Caco-2 (cell line): ENCODE measurements at regions of chr1 and their contacts with region 1.

Region 1: GRCh38 chr1:156096640-156097391 is 14.6 kb upstream of the MEX3A start:
- DNase-seq: peak; percentile 90 to 92
- H3K4me3 ChIP-seq: no peak overlapping the region
- H3K4me3 Mint-ChIP-seq: no peak overlapping the region
- H3K27ac Mint-ChIP-seq: peak overlapping the region; percentile 96
- H3K4me1 ChIP-seq: peaks cover 27% of the 10 kb centered on the region
- H3K4me1 Mint-ChIP-seq: peaks cover 35% of the 10 kb centered on the region
- H3K27me3 ChIP-seq: no peaks in the 10 kb centered on the region
- H3K27me3 Mint-ChIP-seq: no peaks in the 10 kb centered on the region
- CTCF ChIP-seq: peak; percentile 91 to 96

Region 2: GRCh38 chr1:156025877-156026276 is 70.9 kb before region 1 on chr1:
- CTCF ChIA-PET with region 1: no interaction called
- POLR2A ChIA-PET with region 1: no interaction called
- intact Hi-C with region 1: no loop called
- DNase-seq: peak; percentile 62 to 64
- H3K4me3 ChIP-seq: no peak overlapping the region
- H3K4me3 Mint-ChIP-seq: no peak overlapping the region
- H3K27ac Mint-ChIP-seq: no peak overlapping the region
- H3K4me1 ChIP-seq: peaks cover 13% of the 10 kb centered on the region; the same call in 1 of the 2 replicates
- H3K4me1 Mint-ChIP-seq: no peaks in the 10 kb centered on the region
- H3K27me3 ChIP-seq: no peaks in the 10 kb centered on the region
- H3K27me3 Mint-ChIP-seq: no peaks in the 10 kb centered on the region
- CTCF ChIP-seq: peak; percentile 34 to 65

Region 3: GRCh38 chr1:156114101-156114916 is 17.5 kb after region 1 on chr1 and contains the start of gene LMNA:
- CTCF ChIA-PET with region 1: interaction called, 11 read pairs
- POLR2A ChIA-PET with region 1: interaction called, 3 read pairs
- intact Hi-C with region 1: no loop called
- DNase-seq: peak; percentile 83
- H3K4me3 ChIP-seq: peak within 1 kb of the TSS; percentile 98
- H3K4me3 Mint-ChIP-seq: peak within 1 kb of the TSS; percentile 95
- H3K27ac Mint-ChIP-seq: peak within 1 kb of the TSS; percentile 63
- H3K4me1 ChIP-seq: peaks cover 35% of the 10 kb centered on the region
- H3K4me1 Mint-ChIP-seq: peaks cover 26% of the 10 kb centered on the region
- H3K27me3 ChIP-seq: no peaks in the 10 kb centered on the region
- H3K27me3 Mint-ChIP-seq: no peaks in the 10 kb centered on the region
- CTCF ChIP-seq: no peak
- total RNA-seq, gene LMNA: 112 and 113 TPM in 2 replicates

Region 4: GRCh38 chr1:156123356-156124196 is 26.8 kb after region 1 on chr1:
- CTCF ChIA-PET with region 1: interaction called, 115 read pairs
- POLR2A ChIA-PET with region 1: no interaction called
- intact Hi-C with region 1: no loop called
- DNase-seq: peak; percentile 73 to 75
- H3K4me3 ChIP-seq: no peak overlapping the region
- H3K4me3 Mint-ChIP-seq: peak overlapping the region; percentile 31
- H3K27ac Mint-ChIP-seq: peak overlapping the region; percentile 92
- H3K4me1 ChIP-seq: peaks cover 82% of the 10 kb centered on the region
- H3K4me1 Mint-ChIP-seq: peaks cover 47% of the 10 kb centered on the region
- H3K27me3 ChIP-seq: no peaks in the 10 kb centered on the region
- H3K27me3 Mint-ChIP-seq: no peaks in the 10 kb centered on the region
- CTCF ChIP-seq: peak in 1 of 2 experiments; percentile 17

Region 5: GRCh38 chr1:156136970-156137483 is 40.2 kb after region 1 on chr1:
- CTCF ChIA-PET with region 1: interaction called, 115 read pairs
- POLR2A ChIA-PET with region 1: no interaction called
- intact Hi-C with region 1: no loop called
- DNase-seq: no peak
- H3K4me3 ChIP-seq: no peak overlapping the region
- H3K4me3 Mint-ChIP-seq: no peak overlapping the region
- H3K27ac Mint-ChIP-seq: peak overlapping the region; percentile 69
- H3K4me1 ChIP-seq: no peaks in the 10 kb centered on the region
- H3K4me1 Mint-ChIP-seq: no peaks in the 10 kb centered on the region
- H3K27me3 ChIP-seq: no peaks in the 10 kb centered on the region
- H3K27me3 Mint-ChIP-seq: no peaks in the 10 kb centered on the region
- CTCF ChIP-seq: peak in 1 of 2 experiments; percentile 49